Dorsolateral prefrontal cortex (tissue), 120 donors: ENCODE measurements at regions of chr3 and their contacts with region 1.

Region 1: GRCh38 chr3:13495921-13496723 is 16.0 kb downstream of the HDAC11 start:
- DNase-seq: peak; percentile 76 to 89 (median 83)
- H3K4me3 ChIP-seq: peak overlapping the region in 8 of 59 donors; percentile 3 to 33 (median 14)
- H3K27ac ChIP-seq: peak overlapping the region; percentile 52 to 99 (median 92)
- H3K27me3 ChIP-seq: no peaks in the 10 kb centered on the region
- CTCF ChIP-seq: peak; percentile 66 to 99 (median 95)

Region 2: GRCh38 chr3:12922306-12922705 is 573.8 kb before region 1 on chr3:
- intact Hi-C with region 1: no loop called
- DNase-seq: peak in 1 of 10 donors; percentile 27
- H3K4me3 ChIP-seq: no peak overlapping the region
- H3K27ac ChIP-seq: peak overlapping the region in 46 of 59 donors; percentile 2 to 82 (median 54)
- H3K27me3 ChIP-seq: no peaks in the 10 kb centered on the region
- CTCF ChIP-seq: no peak

Region 3: DNA sequence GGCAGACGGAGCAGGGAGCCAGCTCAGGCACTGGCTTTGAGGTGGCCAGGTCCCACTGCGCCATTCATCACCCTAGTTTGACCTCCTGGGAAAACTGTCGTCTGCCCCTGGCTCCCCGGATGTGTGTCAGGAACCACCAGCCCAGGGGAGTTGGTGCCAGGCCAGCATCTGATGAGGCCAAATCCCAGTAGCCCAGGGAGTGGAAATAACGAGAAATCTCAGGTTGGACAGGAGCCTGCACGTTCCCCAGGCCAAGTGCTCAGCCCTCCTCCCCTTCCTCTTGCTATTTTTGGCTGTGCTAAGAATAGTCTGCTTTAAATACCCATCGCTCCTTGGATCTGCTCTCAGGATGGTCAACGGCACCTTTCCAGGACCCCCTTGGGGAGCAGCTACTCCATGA is 561.7 kb before region 1 on chr3:
- intact Hi-C with region 1: no loop called
- DNase-seq: peak in 1 of 10 donors; percentile 57
- H3K4me3 ChIP-seq: peak overlapping the region in 3 of 59 donors; percentile 7 to 13 (median 7)
- H3K27ac ChIP-seq: peak overlapping the region in 53 of 59 donors; percentile 0 to 89 (median 73)
- H3K27me3 ChIP-seq: no peaks in the 10 kb centered on the region
- CTCF ChIP-seq: no peak

Region 4: DNA sequence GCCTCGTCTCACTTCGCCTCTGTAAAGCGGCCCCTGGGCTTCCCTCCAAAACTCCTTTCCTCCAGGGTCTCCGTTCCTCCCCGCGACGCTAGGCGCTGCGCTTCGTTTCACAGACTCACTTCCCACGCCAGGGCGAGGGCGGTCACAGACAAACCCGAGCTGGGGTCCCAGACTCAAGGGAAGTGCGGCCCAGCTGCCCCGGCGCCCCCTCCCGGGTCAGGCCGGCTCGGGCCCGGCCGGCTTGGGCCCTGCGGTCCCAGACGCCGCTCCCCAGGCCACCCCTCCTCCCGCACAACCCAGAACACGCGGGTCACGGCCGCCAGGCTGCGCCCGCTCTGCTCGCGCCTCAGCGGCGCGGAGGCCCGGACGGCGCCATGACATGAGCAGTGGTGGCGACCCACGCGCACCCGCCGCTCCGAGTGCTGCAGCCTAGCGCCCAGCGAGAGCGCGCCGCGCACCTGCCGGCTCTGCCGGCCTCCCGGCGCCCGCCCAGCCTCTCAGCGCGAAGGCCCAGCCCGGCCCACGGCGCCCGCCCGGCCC is 76.5 kb before region 1 on chr3:
- intact Hi-C with region 1: loop called in 1 of 2 experiments (anchors 5 kb)
- DNase-seq: peak; percentile 31 to 78 (median 56)
- H3K4me3 ChIP-seq: peak overlapping the region; percentile 45 to 81 (median 69)
- H3K27ac ChIP-seq: peak overlapping the region in 57 of 59 donors; percentile 45 to 91 (median 78)
- H3K27me3 ChIP-seq: no peaks in the 10 kb centered on the region
- CTCF ChIP-seq: peak in 34 of 56 donors; percentile 3 to 49 (median 32)

Region 5: GRCh38 chr3:13479581-13480339 is 16.4 kb before region 1 on chr3 and contains the start of gene HDAC11:
- intact Hi-C with region 1: loop called (anchors 1 to 2 kb)
- DNase-seq: peak; percentile 98 to 100 (median 99)
- H3K4me3 ChIP-seq: peak within 1 kb of the TSS; percentile 72 to 97 (median 82)
- H3K27ac ChIP-seq: peak within 1 kb of the TSS; percentile 91 to 100 (median 98)
- H3K27me3 ChIP-seq: no peaks in the 10 kb centered on the region
- CTCF ChIP-seq: peak; percentile 33 to 76 (median 60)
- total RNA-seq, gene HDAC11: 48.3 to 174 (median 79.7) TPM

Region 6: DNA sequence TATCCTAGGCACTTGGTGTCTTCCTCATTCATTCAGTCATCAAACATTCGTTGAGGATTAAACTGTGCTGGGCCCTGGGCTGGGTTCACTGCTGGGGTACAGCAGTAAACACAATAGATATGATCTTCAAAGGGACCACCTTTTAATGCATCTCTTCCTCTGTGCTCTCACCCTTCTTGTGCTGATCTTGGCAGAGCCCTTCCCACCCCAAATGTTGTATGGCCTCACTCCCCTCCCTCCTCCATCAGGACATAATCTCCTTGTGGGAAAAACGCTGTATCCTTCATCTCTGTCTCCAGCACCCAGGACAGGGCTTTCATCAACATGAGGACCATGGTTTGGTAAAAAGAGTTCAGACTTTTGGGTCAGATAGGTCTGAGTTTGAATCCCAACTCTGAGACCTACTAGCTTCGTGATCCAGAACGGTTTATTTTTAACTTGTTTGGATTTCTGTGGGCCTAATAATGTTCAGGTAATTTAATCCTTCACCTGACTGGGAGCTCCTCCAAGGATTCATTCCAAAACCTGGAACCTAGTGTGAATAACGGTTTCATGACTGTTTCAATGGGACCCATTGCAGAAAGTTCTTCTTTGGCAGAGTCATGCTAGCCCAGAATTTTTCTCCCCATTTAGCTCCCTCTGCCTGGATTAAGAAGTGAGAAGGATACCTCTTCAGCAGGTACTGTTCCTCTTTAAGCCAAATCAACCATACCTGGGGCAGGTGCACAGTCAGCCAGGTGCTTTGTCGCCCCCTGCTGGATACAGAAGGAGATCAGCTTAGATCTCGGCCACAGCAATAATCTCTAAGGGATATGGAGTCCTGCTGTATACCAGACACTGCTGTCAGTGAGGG is 389.0 kb after region 1 on chr3:
- intact Hi-C with region 1: loop called (anchors 10 kb)
- DNase-seq: peak in 2 of 10 donors; percentile 32 to 36
- H3K4me3 ChIP-seq: no peak overlapping the region
- H3K27ac ChIP-seq: no peak overlapping the region
- H3K27me3 ChIP-seq: peaks cover 0 to 16% (median 3%) of the 10 kb centered on the region in 45 donors
- CTCF ChIP-seq: peak in 55 of 56 donors; percentile 26 to 67 (median 53)